K562 (cell line): ENCODE measurements at regions of chr2 and their contacts with region 1.

Region 1: GRCh38 chr2:73373344-73373743 is 12.3 kb upstream of the ALMS1 start:
- DNase-seq: peak; percentile 7 to 37 (median 24)
- ATAC-seq: no peak
- H3K4me3 ChIP-seq: no peak overlapping the region
- H3K27ac ChIP-seq: no peak overlapping the region
- H3K4me1 ChIP-seq: peaks cover 0 to 2% of the 10 kb centered on the region in 2 experiments; a peak in 1 of 5 replicates
- H3K27me3 ChIP-seq: peaks cover 0 to 18% of the 10 kb centered on the region in 2 experiments; a peak in 3 of 5 replicates
- CTCF ChIP-seq: no peak
- EP300 ChIP-seq: no peak
- POLR2A ChIP-seq: no peak
- RAD21 ChIP-seq: no peak

Region 2: GRCh38 chr2:73202156-73203054 is 170.9 kb before region 1 on chr2 and contains the start of gene NOTO:
- CTCF ChIA-PET with region 1: no interaction called
- POLR2A ChIA-PET with region 1: no interaction called
- in situ Hi-C with region 1: no loop called
- intact Hi-C with region 1: no loop called
- DNase-seq: no peak
- ATAC-seq: no peak
- H3K4me3 ChIP-seq: no peak within 1 kb of the TSS
- H3K27ac ChIP-seq: no peak within 1 kb of the TSS
- H3K4me1 ChIP-seq: peaks cover 0 to 14% of the 10 kb centered on the region in 2 experiments; a peak in 2 of 5 replicates
- H3K27me3 ChIP-seq: peaks cover 11 to 40% of the 10 kb centered on the region in 2 experiments; a peak in 3 of 5 replicates
- CTCF ChIP-seq: no peak
- EP300 ChIP-seq: no peak
- POLR2A ChIP-seq: no peak
- RAD21 ChIP-seq: no peak
- polyA plus RNA-seq, gene NOTO: not detected

Region 3: GRCh38 chr2:73297151-73297559 is 76.2 kb before region 1 on chr2:
- CTCF ChIA-PET with region 1: no interaction called
- POLR2A ChIA-PET with region 1: no interaction called
- in situ Hi-C with region 1: no loop called
- intact Hi-C with region 1: loop called (anchors 5 kb)
- DNase-seq: no peak
- ATAC-seq: no peak
- H3K4me3 ChIP-seq: no peak overlapping the region
- H3K27ac ChIP-seq: no peak overlapping the region
- H3K4me1 ChIP-seq: peaks cover 0 to 16% of the 10 kb centered on the region in 2 experiments; a peak in 2 of 5 replicates
- H3K27me3 ChIP-seq: peaks cover 7 to 47% of the 10 kb centered on the region in 2 experiments; a peak in 4 of 5 replicates
- CTCF ChIP-seq: no peak
- EP300 ChIP-seq: no peak
- POLR2A ChIP-seq: no peak
- RAD21 ChIP-seq: no peak